Left lung (tissue), 14 donors: ENCODE measurements at regions of chr7 and their contacts with region 1.

Region 1: GRCh38 chr7:5704534-5704922 is 76.9 kb downstream of the RNF216 start:
- DNase-seq: peak in 3 of 4 donors; percentile 70 to 90 (median 84)
- ATAC-seq: peak; percentile 93
- H3K4me3 ChIP-seq: no peak overlapping the region
- H3K27ac ChIP-seq: peak overlapping the region in 1 of 2 donors; percentile 13
- H3K4me1 ChIP-seq: peaks cover 3 to 45% of the 10 kb centered on the region in 2 donors
- H3K27me3 ChIP-seq: no peaks in the 10 kb centered on the region
- CTCF ChIP-seq: peak; percentile 87 to 88

Region 2: DNA sequence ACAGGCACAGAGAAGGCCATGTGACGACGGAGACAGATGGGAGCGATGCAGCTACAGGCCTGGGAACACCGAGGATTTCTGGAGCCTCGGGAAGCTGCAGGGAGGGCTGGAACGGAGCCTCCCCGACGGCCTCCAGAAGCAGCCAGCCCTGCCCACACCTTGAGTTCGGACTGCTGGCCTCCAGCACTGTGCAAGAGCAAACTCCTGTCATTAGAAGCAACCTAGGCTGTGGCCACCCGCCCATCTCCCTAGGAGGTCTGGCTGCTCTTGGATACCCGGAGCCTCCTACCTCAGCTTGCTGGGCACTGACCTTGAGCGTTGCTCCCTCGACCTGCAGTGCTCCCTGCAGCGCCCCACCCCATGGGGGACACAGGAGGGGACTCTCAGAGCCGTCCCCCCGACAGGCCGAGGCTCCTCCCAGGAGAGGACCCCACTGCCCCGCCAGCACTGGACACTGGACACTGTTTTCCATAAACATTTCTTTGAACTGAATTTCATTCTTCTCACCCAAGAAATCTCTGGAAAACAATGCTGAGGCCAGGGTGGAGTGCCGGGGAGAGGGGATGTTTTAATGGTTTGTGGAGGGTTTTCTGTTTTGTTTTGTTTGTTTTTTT is 258.4 kb before region 1 on chr7:
- intact Hi-C with region 1: no loop called
- DNase-seq: no peak
- ATAC-seq: no peak
- H3K4me3 ChIP-seq: no peak overlapping the region
- H3K27ac ChIP-seq: no peak overlapping the region
- H3K4me1 ChIP-seq: peaks cover 0 to 24% of the 10 kb centered on the region in 2 donors
- H3K27me3 ChIP-seq: no peaks in the 10 kb centered on the region
- CTCF ChIP-seq: no peak

Region 3: DNA sequence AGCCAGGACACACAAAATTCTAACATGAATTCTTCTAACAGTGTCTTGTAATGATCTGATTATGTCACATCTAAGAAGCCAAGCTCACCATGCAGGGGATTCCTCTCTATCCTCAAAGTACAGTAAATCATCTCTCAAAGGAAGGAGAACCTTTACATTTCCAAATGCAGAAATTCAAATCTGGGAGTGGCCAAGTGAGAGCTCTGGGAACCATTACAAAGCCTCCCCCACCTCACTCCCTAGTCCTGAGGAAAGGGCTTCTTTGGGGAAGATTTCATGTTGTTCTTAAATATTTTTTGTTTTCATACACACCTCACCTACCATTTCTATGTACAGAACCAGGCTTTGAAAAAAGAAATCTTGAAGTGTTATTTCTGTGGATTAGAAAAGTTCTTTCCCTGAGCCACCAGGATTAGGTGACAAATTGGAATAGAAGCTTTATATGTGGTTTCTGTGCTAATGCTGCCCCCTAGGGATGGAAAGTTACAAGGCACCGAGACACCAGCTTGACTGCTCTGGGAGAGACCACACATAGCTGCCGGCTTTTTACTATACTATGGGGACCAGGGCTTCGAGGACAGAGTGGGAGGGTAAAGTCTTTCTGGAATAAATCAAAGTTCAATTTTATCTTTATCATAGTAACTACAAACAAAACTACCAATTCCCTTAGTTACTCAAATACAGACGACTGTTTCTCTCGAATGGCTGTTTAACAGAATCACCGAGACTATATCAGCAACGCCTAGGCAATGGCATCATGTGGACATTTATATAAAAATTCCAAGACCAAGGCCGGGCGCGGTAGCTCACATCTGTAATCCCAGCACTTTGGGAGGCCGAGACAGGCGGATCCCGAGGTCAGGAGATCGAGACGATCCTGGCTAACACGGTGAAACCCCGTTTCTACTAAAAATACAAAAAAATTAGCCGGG is 39.2 kb before region 1 on chr7:
- intact Hi-C with region 1: loop called in 1 of 2 experiments (anchors 5 kb)
- DNase-seq: peak in 2 of 4 donors; percentile 83 to 91
- ATAC-seq: peak; percentile 90
- H3K4me3 ChIP-seq: no peak overlapping the region
- H3K27ac ChIP-seq: no peak overlapping the region
- H3K4me1 ChIP-seq: peaks cover 0 to 64% of the 10 kb centered on the region in 2 donors
- H3K27me3 ChIP-seq: no peaks in the 10 kb centered on the region
- CTCF ChIP-seq: peak; percentile 85 to 86